ENCODE measurements at regions of chr19 and their contacts with region 1.

Region 1: GRCh38 chr19:46283771-46284170 is 13.1 kb upstream of the HIF3A start:
- DNase-seq: no peak
- ATAC-seq: no peak
- H3K4me3 ChIP-seq: no peak overlapping the region
- H3K27ac ChIP-seq: no peak overlapping the region
- H3K4me1 ChIP-seq: no peaks in the 10 kb centered on the region
- H3K27me3 ChIP-seq: no peaks in the 10 kb centered on the region
- CTCF ChIP-seq: no peak

Region 2: DNA sequence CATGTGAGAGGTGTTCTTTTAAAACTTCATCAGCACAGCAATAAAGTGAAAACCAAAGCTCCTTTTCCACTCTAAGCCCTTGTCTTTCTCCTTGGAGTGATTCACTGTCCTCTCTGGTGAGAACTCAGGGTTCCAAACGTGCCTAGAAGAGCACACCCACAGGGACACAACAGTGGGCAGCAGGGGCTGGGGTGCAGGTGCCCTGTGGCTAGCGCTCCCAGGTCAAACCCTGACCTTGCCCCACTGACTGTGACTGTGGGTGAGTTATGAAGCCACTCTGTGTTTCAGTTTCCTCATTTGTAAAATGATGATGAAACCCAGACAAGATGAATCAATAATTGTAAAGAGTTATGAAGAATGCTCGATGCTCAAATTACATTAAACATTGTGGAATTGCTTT is 91.8 kb before region 1 on chr19:
- CTCF ChIA-PET with region 1: interaction called, 11 read pairs
- POLR2A ChIA-PET with region 1: no interaction called
- in situ Hi-C with region 1: no loop called
- intact Hi-C with region 1: no loop called
- DNase-seq: no peak
- ATAC-seq: no peak
- H3K4me3 ChIP-seq: no peak overlapping the region
- H3K27ac ChIP-seq: no peak overlapping the region
- H3K4me1 ChIP-seq: no peaks in the 10 kb centered on the region; the same call in 1 of the 2 replicates
- H3K27me3 ChIP-seq: no peaks in the 10 kb centered on the region; the same call in 1 of the 2 replicates
- CTCF ChIP-seq: no peak

Region 3: DNA sequence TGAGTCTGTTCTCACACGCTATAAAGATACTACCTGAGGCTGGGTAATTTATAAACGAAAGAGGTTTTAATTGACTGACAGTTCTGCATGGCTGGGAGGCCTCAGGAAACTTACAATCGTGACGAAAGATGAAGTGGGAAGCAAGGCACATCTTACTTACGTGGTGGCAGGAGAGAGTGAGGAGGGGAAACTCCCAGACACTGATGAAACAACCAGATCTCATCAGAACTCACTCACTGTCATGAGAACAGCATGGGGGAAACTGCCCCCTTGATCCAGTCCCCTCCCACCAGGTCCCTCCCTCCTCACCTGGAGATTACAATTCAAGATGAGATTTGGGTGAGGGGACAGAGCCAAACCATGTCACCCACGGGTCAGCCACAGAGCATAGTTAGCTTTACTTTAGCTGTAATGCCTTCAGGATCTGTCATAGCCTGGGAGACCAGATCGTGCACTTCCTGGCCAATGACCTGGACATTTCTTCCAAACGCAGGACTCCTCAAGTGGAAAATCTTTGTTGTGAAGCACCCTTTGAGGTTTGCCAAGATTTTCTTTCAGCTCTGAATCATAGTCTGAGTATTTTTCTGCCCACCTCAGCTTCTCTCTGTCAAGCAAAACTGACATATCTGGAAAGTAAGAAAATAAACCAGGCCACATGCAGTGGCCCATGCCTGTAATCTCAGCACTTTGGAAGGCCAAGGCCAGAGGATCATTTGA is 12.1 kb before region 1 on chr19:
- CTCF ChIA-PET with region 1: interaction called, 14 read pairs
- POLR2A ChIA-PET with region 1: no interaction called
- in situ Hi-C with region 1: no loop called
- intact Hi-C with region 1: no loop called
- DNase-seq: no peak
- ATAC-seq: no peak; the same call in 1 of the 2 replicates
- H3K4me3 ChIP-seq: no peak overlapping the region
- H3K27ac ChIP-seq: no peak overlapping the region
- H3K4me1 ChIP-seq: no peaks in the 10 kb centered on the region
- H3K27me3 ChIP-seq: no peaks in the 10 kb centered on the region
- CTCF ChIP-seq: no peak

Region 4: DNA sequence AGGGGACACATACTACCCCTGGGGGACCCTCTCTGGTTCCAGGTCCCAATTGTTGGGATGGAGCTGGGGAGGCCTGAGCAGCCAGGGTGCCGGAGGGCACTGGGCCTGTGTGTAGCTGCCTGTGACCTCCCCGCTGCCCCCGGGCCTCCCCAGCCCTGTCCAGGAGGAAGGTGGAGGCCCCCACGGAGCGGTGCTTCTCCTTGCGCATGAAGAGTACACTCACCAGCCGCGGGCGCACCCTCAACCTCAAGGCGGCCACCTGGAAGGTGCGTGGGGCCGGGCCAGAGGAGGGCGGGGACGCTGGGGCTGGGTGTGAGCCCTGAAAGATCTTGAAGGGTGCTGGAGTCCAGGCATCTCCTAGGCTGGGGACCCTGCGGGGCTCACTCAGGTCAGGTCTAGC is 24.7 kb after region 1 on chr19:
- CTCF ChIA-PET with region 1: interaction called, 12 read pairs
- POLR2A ChIA-PET with region 1: interaction called, 3 read pairs
- in situ Hi-C with region 1: no loop called
- intact Hi-C with region 1: no loop called
- DNase-seq: no peak
- ATAC-seq: no peak
- H3K4me3 ChIP-seq: no peak overlapping the region
- H3K27ac ChIP-seq: no peak overlapping the region
- H3K4me1 ChIP-seq: no peaks in the 10 kb centered on the region
- H3K27me3 ChIP-seq: no peaks in the 10 kb centered on the region
- CTCF ChIP-seq: no peak

Region 5: DNA sequence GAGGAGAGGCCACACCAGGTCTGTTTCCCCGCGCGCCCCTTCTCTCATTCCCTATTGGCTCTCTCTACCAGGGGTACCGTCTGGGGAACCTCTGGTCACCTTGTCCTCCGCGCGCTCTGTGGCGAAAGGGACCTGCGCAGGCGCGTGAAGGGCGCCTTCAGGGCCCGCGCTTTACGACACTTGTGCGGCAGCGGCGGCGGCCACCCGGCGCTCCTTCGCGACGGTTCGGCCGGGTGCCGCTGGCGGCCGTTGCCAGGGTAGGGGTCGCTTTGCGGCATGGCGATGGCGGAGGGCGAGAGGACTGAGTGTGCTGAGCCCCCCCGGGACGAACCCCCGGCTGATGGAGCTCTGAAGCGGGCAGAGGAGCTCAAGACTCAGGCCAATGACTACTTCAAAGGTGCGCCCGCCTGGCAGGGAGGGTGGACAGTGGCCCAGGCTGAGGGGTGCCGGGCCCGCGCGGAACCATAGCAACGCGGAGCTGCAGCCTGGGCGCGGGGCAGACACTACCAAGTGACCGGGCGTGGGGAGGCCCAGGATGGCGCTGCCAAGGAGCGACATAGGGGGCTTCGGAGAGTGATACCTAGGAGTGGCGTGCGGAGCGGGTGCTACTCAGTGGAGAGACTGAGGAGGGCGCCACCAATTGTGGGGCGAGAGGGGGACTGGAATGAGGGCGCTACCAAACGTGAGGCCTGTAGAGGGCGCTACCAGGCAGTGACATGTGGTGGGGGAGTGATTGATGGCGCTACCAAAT is 63.2 kb after region 1 on chr19 and contains the start of gene PPP5C:
- CTCF ChIA-PET with region 1: interaction called, 5 read pairs
- POLR2A ChIA-PET with region 1: no interaction called
- in situ Hi-C with region 1: no loop called
- intact Hi-C with region 1: loop called (anchors 5 kb)
- DNase-seq: peak; percentile 33
- ATAC-seq: peak; percentile 94
- H3K4me3 ChIP-seq: peak within 1 kb of the TSS; percentile 57 to 58
- H3K27ac ChIP-seq: peak within 1 kb of the TSS; percentile 89
- H3K4me1 ChIP-seq: peaks cover 3% of the 10 kb centered on the region; the same call in 1 of the 2 replicates
- H3K27me3 ChIP-seq: no peaks in the 10 kb centered on the region
- CTCF ChIP-seq: peak; percentile 86
- total RNA-seq, gene PPP5C: 58.1 TPM

Region 6: DNA sequence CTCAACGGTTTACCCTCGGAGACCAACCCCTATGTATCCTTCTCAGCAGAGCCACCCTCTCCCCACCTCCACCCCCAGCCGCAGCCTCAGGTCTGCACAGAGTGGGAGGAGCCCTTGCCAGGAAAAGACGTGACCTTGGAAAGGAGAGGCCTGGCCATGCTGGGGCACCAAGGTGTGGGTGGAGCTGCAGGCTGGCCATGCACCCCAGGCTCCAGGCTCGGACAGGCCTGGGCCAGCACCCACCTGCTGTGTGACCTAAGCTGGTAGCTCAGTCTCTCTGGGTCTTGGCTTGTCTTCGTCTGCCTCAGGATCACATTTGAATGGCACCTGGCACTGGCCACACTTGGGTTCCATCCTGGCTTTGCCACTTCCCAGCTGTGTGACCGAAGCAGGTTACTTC is 100.1 kb after region 1 on chr19:
- CTCF ChIA-PET with region 1: no interaction called
- POLR2A ChIA-PET with region 1: no interaction called
- in situ Hi-C with region 1: no loop called
- intact Hi-C with region 1: no loop called
- DNase-seq: no peak
- ATAC-seq: no peak
- H3K4me3 ChIP-seq: no peak overlapping the region
- H3K27ac ChIP-seq: no peak overlapping the region
- H3K4me1 ChIP-seq: no peaks in the 10 kb centered on the region
- H3K27me3 ChIP-seq: no peaks in the 10 kb centered on the region
- CTCF ChIP-seq: no peak

Region 7: DNA sequence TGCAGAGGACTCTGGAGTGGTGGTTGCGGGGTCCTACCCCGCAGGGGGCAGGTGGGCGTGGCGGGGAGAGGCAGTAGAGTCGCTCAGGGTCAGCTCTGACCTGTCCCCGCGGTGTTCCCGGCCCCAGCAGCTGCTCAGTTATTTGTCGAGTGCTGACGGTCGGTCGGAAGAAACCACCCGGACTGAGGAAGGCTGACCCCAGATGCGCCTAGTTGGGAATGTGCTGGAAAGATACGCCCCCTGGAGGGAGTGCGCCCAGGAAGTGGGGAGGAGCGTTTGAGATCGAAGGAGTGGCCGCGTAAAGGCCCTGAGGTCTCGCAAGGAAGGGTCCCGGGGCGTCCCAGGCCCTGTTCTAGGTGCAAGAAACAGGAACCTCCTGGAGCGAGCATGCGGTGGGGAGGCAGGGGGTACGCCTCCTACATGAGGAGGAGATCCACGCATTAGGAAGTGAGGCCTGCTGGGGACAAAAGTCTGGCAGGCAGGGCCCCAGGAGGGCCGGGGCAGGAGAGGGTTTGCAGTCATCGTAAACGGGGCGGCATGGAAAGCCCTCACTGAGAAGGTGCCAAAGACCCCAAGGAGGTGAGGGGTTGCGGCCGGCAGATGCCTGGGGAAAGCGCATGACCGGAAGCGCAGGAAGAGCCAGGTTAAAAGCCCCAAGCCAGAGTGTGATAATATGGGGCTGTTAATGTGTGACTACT is 120.4 kb after region 1 on chr19:
- CTCF ChIA-PET with region 1: interaction called, 12 read pairs
- POLR2A ChIA-PET with region 1: no interaction called
- in situ Hi-C with region 1: no loop called
- intact Hi-C with region 1: loop called (anchors 10 kb)
- DNase-seq: no peak
- ATAC-seq: peak; percentile 78
- H3K4me3 ChIP-seq: peak overlapping the region; percentile 33 to 58
- H3K27ac ChIP-seq: peak overlapping the region; percentile 61
- H3K4me1 ChIP-seq: peaks cover 3% of the 10 kb centered on the region; the same call in 1 of the 2 replicates
- H3K27me3 ChIP-seq: no peaks in the 10 kb centered on the region
- CTCF ChIP-seq: no peak